Endothelial cell of umbilical vein (primary cell): ENCODE measurements at regions of chr17 and their contacts with region 1.

Region 1: DNA sequence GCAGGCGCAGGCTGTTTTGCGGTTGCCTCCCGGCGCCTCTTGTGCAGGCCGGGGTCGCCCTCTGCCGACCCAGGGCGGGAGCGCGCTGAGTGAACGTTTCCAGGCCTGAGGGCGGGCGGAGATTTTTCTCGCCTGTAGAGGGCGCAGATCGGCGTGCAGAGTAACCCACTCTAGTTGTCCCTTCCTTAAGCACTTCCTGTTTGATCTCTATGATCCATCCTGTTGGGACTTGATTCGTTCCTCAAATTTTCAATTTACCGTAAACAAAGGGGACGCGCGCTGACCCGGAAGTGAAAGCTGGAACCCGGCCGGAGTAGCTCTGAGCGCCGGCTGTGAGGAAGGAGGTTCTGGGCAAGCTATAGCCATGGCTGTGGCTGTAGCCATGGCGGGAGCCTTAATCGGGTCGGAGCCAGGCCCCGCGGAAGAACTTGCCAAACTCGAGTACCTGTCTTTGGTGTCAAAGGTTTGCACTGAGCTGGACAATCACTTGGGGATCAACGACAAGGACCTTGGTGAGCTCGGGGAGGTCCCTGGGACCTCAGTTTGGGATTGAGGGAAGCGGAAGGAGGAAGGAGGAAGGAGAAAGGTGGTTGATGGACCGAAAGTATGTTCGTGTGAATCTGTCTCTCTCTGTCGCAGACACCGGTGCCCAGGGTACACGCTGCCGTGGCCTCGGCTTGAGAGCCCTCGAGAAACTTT is at the start of gene DHX8:
- DNase-seq: peak; percentile 99
- H3K4me3 ChIP-seq: peak within 1 kb of the TSS; percentile 53 to 89 (median 83)
- H3K27ac ChIP-seq: peak within 1 kb of the TSS; percentile 42
- H3K4me1 ChIP-seq: peaks cover 11% of the 10 kb centered on the region
- H3K27me3 ChIP-seq: no peaks in the 10 kb centered on the region
- CTCF ChIP-seq: peak; percentile 100
- POLR2A ChIP-seq: peak; percentile 90
- total RNA-seq, gene DHX8: 52.1 and 65.6 TPM in 2 replicates

Region 2: DNA sequence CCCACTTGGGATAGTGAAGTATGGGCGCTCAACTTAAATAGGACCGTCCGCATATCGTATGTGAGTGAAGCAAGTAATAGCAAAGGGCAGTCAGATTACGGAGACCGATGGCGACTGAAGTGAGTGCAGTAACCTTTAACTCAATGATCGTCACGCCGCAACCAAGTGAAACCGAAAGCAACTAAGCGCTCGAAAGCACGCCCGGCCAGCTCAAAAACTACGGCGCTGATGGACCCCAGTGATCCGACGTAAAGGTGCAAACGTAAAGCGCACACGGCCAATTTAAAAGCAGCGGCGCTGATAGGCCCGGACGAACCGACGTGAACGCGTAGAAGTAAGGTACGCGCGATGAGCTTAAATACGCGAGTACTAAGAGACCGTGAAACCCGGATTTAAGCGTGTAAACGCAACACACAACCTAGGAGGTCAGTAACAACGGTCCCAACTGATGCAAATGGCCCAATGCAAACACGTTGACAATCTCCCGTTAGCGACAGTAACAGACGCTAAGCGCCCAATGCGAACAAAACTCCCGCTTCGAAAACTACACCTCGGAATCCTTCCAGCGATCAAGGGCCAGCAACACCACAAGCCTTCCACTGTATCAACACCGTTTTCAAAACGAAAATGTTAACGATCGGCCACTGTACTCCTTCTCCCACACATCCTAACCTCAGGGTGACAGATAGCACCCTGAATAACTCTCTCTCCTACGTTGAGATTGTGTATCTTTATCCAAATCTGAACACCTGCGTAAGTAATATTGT is 122.9 kb before region 1 on chr17:
- CTCF ChIA-PET with region 1: interaction called, 27 read pairs
- POLR2A ChIA-PET with region 1: interaction called, 50 read pairs
- dilution Hi-C with region 1: no loop called
- intact Hi-C with region 1: loop called (anchors 2 kb)
- DNase-seq: peak; percentile 97
- H3K4me3 ChIP-seq: peak overlapping the region in 2 of 3 experiments; percentile 40 to 86
- H3K27ac ChIP-seq: peak overlapping the region; percentile 99
- H3K4me1 ChIP-seq: peaks cover 10% of the 10 kb centered on the region
- H3K27me3 ChIP-seq: no peaks in the 10 kb centered on the region
- CTCF ChIP-seq: no peak
- POLR2A ChIP-seq: peak; percentile 100

Region 3: DNA sequence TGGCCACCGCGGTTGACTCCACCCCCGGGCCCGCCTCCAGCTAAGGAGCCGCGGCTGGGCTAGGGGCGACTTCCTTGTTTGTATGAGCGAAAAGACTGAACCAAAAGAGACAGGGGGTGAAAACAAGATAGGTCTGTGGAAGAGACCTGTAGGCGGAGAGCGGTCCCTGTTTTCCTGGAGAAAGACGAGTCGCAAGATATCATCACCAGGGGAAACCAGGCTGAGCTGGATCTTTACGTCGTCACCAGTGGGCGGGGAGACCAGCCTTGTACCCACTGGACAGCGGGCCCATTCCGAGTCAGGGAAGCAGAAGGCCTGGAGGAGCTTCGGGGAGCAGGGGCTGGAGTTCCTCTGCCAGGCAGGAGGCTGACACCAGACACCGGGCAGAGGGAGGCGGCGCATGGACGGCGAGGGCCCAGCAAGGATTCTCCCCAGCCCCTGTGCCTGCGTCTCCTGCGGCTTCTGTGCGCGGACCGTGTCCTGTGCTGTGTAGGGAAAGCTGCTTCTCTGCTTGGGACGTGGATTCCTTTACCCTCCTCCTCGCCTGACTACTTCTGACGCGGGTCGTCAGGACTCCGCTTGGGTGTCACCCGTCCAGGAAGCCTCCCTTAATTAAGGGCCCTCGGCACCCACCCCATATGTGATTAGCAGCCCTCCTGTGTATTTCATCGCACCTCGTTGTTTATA is 95.3 kb before region 1 on chr17:
- CTCF ChIA-PET with region 1: interaction called, 434 read pairs
- POLR2A ChIA-PET with region 1: interaction called, 16 read pairs
- dilution Hi-C with region 1: no loop called
- intact Hi-C with region 1: loop called (anchors 1 kb)
- DNase-seq: peak; percentile 94
- H3K4me3 ChIP-seq: peak overlapping the region; percentile 26 to 55 (median 47)
- H3K27ac ChIP-seq: peak overlapping the region; percentile 65
- H3K4me1 ChIP-seq: peaks cover 4% of the 10 kb centered on the region
- H3K27me3 ChIP-seq: peaks cover 2 to 6% of the 10 kb centered on the region in 2 experiments
- CTCF ChIP-seq: no peak
- POLR2A ChIP-seq: peak; percentile 84

Region 4: DNA sequence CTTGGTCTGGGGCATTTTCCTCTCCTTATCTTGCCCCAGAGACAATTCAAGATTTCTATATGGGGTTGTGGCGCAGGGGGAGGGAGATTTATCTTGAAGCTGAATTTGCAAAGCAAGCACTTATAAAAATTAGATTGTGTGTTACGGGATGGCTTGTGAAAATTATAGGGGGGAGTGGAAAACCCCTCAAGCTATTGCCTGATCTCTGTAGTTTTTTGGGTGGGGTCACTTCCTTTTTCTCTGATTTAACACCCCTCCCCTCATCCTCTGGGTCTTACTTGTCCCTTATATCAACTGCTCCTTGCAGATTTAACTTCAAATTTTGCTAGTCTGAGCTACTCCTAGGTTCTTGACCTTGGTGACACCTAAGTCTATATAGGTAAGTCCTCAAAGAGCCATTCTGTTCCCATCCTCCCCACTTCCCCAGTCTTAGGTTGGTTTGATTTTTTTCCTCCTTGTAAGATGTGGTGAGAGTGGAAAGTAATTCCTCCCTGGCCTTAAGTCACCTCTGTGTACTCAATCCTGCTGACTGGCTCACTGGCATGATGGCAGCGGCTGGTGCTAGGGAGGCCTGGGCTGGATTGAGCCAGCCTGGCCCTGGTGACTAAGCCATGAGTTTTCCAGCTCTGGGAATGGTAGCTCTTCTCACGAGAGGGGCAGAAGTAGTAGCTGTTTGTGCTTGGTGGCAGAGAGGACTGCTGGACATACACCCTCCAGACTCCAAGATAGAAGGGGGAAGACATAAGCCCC is 82.7 kb before region 1 on chr17:
- CTCF ChIA-PET with region 1: interaction called, 434 read pairs
- POLR2A ChIA-PET with region 1: interaction called, 17 read pairs
- dilution Hi-C with region 1: no loop called
- intact Hi-C with region 1: loop called (anchors 1 kb)
- DNase-seq: peak; percentile 27
- H3K4me3 ChIP-seq: no peak overlapping the region
- H3K27ac ChIP-seq: no peak overlapping the region
- H3K4me1 ChIP-seq: peaks cover 10% of the 10 kb centered on the region
- H3K27me3 ChIP-seq: no peaks in the 10 kb centered on the region
- CTCF ChIP-seq: no peak
- POLR2A ChIP-seq: no peak

Region 5: GRCh38 chr17:43467981-43468581 is 15.7 kb before region 1 on chr17:
- CTCF ChIA-PET with region 1: interaction called, 24 read pairs
- POLR2A ChIA-PET with region 1: interaction called, 5 read pairs
- dilution Hi-C with region 1: no loop called
- intact Hi-C with region 1: no loop called
- DNase-seq: no peak
- H3K4me3 ChIP-seq: no peak overlapping the region
- H3K27ac ChIP-seq: no peak overlapping the region
- H3K4me1 ChIP-seq: no peaks in the 10 kb centered on the region
- H3K27me3 ChIP-seq: peaks cover 0 to 4% of the 10 kb centered on the region in 2 experiments
- CTCF ChIP-seq: no peak
- POLR2A ChIP-seq: no peak

Region 6: GRCh38 chr17:43539408-43539807 is 55.6 kb after region 1 on chr17:
- CTCF ChIA-PET with region 1: no interaction called
- POLR2A ChIA-PET with region 1: no interaction called
- dilution Hi-C with region 1: no loop called
- intact Hi-C with region 1: no loop called
- DNase-seq: no peak
- H3K4me3 ChIP-seq: no peak overlapping the region
- H3K27ac ChIP-seq: no peak overlapping the region
- H3K4me1 ChIP-seq: peaks cover 16% of the 10 kb centered on the region
- H3K27me3 ChIP-seq: no peaks in the 10 kb centered on the region
- CTCF ChIP-seq: no peak
- POLR2A ChIP-seq: no peak